GM10248 (cell line): ENCODE measurements at regions of chr16 and their contacts with region 1.

Region 1: GRCh38 chr16:53207810-53208752 is 153.3 kb downstream of the CHD9 start:
- DNase-seq: peak; percentile 81
- CTCF ChIP-seq: peak; percentile 52

Region 2: GRCh38 chr16:53130159-53131049 is 77.7 kb before region 1 on chr16:
- CTCF ChIA-PET with region 1: interaction called, 11 read pairs
- POLR2A ChIA-PET with region 1: no interaction called
- DNase-seq: peak; percentile 96
- CTCF ChIP-seq: peak; percentile 74

Region 3: DNA sequence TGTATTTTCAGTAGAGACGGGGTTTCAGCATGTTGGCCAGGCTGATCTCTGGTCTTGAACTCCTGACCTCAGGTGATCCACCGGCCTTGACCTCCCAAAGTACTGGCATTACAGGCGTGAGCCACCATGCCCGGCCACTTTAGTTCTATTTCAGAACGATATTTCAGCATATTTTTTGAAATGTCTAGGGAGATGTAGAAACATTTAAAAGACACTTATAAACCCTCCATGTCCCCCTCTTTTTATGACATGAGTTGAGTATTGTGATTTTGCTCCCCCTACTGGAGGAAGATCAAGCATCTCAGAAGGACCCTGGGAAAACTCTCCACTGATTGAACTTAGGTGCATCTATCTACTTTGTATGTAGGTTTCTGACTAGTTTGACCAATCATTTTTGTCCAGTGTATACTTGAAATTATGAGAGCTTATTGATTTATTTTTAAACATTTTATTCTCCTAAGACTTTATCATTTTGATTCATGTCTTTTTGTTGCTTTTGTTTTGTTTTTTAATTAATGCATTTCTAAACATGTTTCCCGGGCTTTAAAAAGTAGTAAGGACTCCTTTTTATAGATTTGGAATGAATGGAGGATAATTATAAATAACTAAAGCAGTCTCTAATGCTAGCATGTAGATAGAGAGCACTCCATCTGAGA is 48.2 kb before region 1 on chr16:
- CTCF ChIA-PET with region 1: interaction called, 12 read pairs
- POLR2A ChIA-PET with region 1: no interaction called
- DNase-seq: peak; percentile 47
- CTCF ChIP-seq: peak; percentile 49

Region 4: DNA sequence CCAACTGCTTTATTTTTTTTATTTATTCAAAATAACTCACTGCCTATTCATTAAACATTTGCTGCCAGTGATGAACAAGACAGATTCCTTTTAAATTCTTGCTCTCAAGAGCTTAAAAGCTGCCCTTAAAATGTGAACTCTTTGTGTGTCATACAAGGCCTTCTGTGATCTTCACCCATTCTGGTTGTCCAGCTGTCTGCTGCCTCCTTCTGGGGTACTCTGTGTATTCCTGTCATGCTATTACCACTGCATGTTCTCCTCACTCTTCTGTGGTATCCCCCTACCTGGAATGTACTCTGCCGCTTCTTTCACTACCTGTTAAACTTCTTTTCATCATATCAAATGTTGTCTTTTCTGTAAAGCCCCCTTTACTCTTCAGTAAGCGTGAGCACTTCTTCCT is 12.5 kb after region 1 on chr16:
- CTCF ChIA-PET with region 1: interaction called, 13 read pairs
- POLR2A ChIA-PET with region 1: no interaction called
- DNase-seq: no peak
- CTCF ChIP-seq: no peak

Region 5: DNA sequence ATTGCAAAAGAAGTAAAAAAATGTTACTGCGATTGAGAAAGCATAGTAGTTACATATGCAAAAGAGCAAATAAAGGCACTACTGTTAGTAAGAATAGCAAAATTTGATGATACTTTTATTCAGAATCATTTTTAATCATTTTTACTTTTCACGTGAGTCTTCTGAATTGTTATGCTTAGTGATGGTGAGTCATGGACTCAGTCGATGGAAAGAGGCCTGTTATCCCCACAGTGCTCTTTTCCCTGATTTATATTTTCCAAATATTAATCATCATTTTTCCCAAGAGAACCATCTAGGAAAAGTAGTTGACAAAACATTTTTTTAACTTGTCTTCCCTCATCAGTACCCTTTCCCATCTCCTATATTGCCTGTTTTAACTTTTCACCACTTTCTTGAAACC is 27.8 kb after region 1 on chr16:
- CTCF ChIA-PET with region 1: no interaction called
- POLR2A ChIA-PET with region 1: no interaction called
- DNase-seq: no peak
- CTCF ChIP-seq: no peak

Region 6: DNA sequence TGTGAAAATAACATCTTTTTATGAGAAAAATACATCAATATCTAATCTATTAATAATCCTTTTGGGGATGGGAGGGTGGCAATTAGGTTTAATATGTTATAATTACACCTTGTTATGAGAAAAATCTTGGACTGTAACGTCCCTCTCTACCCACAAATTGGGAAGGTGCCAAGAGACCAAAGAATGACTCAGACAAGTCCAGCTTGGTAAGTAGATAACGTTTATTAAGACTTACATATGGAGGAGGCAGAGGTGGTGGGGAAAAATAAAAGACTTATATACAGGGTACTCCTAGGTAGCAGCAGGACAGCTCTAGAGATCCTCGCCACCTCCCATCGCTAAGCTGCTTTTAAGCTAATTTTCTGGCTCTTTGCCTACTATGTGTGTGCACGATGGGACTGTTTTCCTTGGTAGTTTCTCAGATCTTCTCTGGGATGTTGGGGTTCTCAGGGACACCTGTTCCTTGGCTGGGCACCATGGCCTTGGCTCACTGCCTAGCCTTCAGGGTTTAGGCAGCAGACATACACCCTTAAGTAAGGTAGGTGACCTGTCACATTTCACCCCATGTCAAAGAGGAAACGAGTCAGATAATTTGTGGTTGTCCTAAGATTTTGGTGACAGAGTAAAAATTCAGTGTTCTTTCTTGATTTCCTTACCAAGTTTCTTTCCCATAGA is 257.7 kb after region 1 on chr16:
- CTCF ChIA-PET with region 1: no interaction called
- POLR2A ChIA-PET with region 1: no interaction called
- DNase-seq: no peak
- CTCF ChIP-seq: no peak